ENCODE measurements at regions of chr7 and their contacts with region 1.

Region 1: DNA sequence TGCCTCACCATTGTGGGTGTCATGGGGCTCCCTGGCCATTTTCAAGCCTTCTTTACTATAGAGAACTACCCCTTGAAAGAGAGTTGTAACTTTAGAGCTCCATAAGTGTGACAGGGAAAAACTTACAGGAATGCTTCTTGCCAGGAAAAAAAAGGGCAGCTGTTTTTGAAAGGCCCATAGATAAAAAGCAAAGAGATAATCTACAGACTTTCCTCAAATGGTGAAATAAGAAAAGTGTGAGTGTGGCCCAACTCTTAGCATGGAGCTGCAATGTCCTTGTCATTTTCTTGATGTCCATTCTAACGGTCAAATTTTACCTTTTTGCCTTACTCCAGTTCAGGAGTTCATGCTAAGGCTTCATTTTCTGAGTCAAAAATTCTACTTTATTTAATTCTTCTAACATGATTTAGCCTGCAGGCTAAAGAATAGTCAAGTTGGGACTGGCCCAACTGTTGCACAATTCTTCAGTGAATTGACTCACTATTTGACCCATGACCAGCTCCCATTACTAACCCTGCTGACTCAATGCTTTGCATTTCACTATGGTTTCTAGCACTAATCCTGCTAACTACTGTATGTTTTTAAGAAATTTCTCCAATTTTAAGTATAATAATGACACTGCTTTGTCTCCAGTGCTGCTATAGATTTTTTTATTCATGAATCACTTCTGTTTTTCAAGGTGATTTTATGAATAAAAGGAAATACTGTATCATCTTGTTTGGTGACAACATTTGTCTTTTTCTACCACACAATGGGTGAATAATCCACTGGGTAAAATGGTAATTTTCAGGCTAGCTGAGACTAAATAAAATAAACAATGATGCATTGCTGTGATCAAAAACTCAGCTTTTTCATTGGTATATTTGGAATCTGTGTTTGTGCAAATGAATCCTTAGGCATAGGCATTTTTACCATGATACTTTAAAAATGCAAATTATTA is 41.4 kb upstream of the SGCE start:
- DNase-seq: peak; percentile 82
- ATAC-seq: peak; percentile 98

Region 2: GRCh38 chr7:92714767-92715166 is 1982.5 kb before region 1 on chr7:
- intact Hi-C with region 1: no loop called
- DNase-seq: no peak
- ATAC-seq: no peak

Region 3: DNA sequence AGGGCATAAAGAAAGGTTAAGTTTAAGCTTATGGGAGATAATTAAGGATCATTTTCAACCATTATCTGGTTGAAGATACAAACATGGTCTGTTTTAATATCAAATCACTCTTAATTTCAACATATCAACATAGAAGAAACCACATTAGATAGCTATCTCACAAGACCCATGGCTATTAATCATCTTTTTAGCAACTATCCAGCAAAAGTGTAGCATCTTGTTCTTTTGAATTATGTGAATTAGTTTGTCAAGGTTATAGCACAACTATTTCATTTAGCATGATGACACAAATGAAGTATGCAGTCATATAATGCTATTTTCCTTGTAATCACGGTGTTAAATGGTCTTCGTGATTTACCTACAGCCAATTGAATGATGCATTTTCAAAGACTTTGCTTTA is 151.2 kb after region 1 on chr7:
- intact Hi-C with region 1: no loop called
- DNase-seq: no peak
- ATAC-seq: no peak

Region 4: GRCh38 chr7:94907026-94907810 is 209.9 kb after region 1 on chr7 and contains the start of gene PPP1R9A:
- intact Hi-C with region 1: loop called (anchors 5 kb)
- DNase-seq: peak; percentile 65
- ATAC-seq: peak; percentile 70
- total RNA-seq, gene PPP1R9A: 47.9 TPM

Measured in sciatic nerve (tissue), 2 donors.